Naive thymus-derived CD4-positive, alpha-beta T cell (primary cell): ENCODE measurements at regions of chr1 and their contacts with region 1.

Region 1: DNA sequence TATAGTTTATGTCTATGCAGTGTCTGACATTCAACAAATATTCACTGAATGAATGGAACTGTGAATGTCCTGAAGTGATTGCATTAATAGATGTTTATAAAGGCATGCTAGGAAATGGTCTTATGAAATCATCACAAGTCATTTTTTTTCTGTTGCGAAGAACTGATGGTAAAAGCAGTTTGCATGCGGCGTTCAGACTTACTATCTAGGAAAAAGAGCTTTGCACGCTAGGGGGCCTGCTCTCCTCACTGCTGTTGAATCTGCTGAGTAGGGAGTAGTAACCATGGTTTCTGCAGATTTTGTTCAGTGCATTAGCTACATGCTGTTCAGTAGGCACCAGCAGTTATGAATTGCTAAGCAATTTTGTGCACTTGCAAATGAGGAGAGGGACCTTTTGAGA is 57.9 kb downstream of the CENPF start:
- DNase-seq: peak in 7 of 9 donors; percentile 7 to 51 (median 45)
- ATAC-seq: peak; percentile 49
- H3K4me3 ChIP-seq: no peak overlapping the region
- H3K4me3 Mint-ChIP-seq: no peak overlapping the region
- H3K27ac ChIP-seq: no peak overlapping the region
- H3K27ac Mint-ChIP-seq: peak overlapping the region in 4 of 9 donors; percentile 8 to 42 (median 30)
- H3K4me1 ChIP-seq: no peaks in the 10 kb centered on the region
- H3K4me1 Mint-ChIP-seq: peaks cover 0 to 20% (median 7%) of the 10 kb centered on the region in 7 donors
- H3K27me3 ChIP-seq: no peaks in the 10 kb centered on the region
- H3K27me3 Mint-ChIP-seq: no peaks in the 10 kb centered on the region

Region 2: GRCh38 chr1:215606564-215607168 is 945.8 kb after region 1 on chr1:
- CTCF ChIA-PET with region 1: no interaction called
- POLR2A ChIA-PET with region 1: no interaction called
- intact Hi-C with region 1: loop called in 1 of 2 experiments (anchors 5 kb)
- DNase-seq: no peak
- ATAC-seq: no peak
- H3K4me3 ChIP-seq: no peak overlapping the region
- H3K4me3 Mint-ChIP-seq: no peak overlapping the region
- H3K27ac ChIP-seq: no peak overlapping the region
- H3K27ac Mint-ChIP-seq: no peak overlapping the region
- H3K4me1 ChIP-seq: no peaks in the 10 kb centered on the region
- H3K4me1 Mint-ChIP-seq: no peaks in the 10 kb centered on the region
- H3K27me3 ChIP-seq: no peaks in the 10 kb centered on the region
- H3K27me3 Mint-ChIP-seq: no peaks in the 10 kb centered on the region